Activated CD4-positive, alpha-beta T cell treated with anti-CD3 and anti-CD28 coated beads for 36 hours (primary cell): ENCODE measurements at regions of chr6 and their contacts with region 1.

Region 1: DNA sequence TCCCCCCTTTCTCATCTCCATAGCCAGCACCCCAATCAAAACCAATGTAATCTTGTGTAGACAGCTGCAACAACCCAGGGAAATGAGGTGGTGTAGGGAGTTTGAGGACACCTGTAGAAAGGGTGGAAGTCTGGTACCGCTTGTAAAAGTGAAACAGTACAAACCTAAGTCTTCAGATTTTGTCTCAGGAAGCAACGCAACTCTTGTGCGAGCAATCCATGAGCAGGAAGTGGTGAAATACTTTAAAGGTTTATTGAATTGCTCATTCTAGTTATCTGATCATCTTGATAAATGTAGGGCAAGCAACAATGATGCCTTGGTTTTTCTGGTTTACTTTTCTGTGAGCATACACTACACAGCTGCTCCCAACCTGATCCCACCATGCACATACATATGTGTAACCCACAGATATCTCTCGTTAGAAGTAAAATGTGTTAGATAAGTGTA is 71.1 kb upstream of the THEMIS start:
- DNase-seq: peak; percentile 64
- ATAC-seq: peak; percentile 89
- H3K4me3 Mint-ChIP-seq: peak overlapping the region; percentile 70
- H3K27ac Mint-ChIP-seq: peak overlapping the region; percentile 90
- H3K4me1 Mint-ChIP-seq: peaks cover 60% of the 10 kb centered on the region
- H3K27me3 Mint-ChIP-seq: no peaks in the 10 kb centered on the region

Region 2: GRCh38 chr6:127737009-127737486 is 234.9 kb before region 1 on chr6:
- CTCF ChIA-PET with region 1: interaction called, 3 read pairs
- POLR2A ChIA-PET with region 1: no interaction called
- intact Hi-C with region 1: loop called in 1 of 2 experiments (anchors 5 kb)
- DNase-seq: peak; percentile 42
- ATAC-seq: peak; percentile 90
- H3K4me3 Mint-ChIP-seq: no peak overlapping the region
- H3K27ac Mint-ChIP-seq: peak overlapping the region; percentile 29
- H3K4me1 Mint-ChIP-seq: peaks cover 44% of the 10 kb centered on the region
- H3K27me3 Mint-ChIP-seq: no peaks in the 10 kb centered on the region

Region 3: DNA sequence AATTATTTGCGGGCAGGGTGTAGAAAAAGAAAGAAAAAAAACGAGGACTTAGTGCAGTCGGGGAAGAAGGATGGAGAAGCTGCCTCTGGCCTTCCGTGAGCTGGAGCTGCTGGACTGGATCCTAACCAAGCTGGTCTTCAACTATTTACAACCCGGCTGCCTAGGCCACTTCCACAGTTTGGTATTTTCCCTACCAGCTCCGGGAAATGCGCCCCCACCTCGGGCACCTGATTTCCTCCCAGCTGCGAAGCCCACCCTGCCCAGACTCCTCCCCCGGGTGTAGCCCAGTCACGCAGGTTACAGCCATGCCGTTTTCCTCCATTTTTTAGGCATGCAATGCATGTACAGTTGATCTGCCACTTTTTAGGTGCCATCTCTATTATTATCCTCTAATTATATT is 92.3 kb before region 1 on chr6:
- CTCF ChIA-PET with region 1: no interaction called
- POLR2A ChIA-PET with region 1: interaction called, 8 read pairs
- intact Hi-C with region 1: loop called (anchors 1 kb)
- DNase-seq: peak; percentile 47
- ATAC-seq: peak; percentile 13
- H3K4me3 Mint-ChIP-seq: peak overlapping the region; percentile 65
- H3K27ac Mint-ChIP-seq: peak overlapping the region; percentile 76
- H3K4me1 Mint-ChIP-seq: peaks cover 78% of the 10 kb centered on the region
- H3K27me3 Mint-ChIP-seq: no peaks in the 10 kb centered on the region

Region 4: GRCh38 chr6:127907960-127908640 is 63.9 kb before region 1 on chr6:
- CTCF ChIA-PET with region 1: no interaction called
- POLR2A ChIA-PET with region 1: interaction called, 4 read pairs
- intact Hi-C with region 1: loop called (anchors 1 to 2 kb)
- DNase-seq: peak; percentile 61
- ATAC-seq: peak; percentile 83
- H3K4me3 Mint-ChIP-seq: peak overlapping the region; percentile 61
- H3K27ac Mint-ChIP-seq: peak overlapping the region; percentile 84
- H3K4me1 Mint-ChIP-seq: peaks cover 55% of the 10 kb centered on the region
- H3K27me3 Mint-ChIP-seq: no peaks in the 10 kb centered on the region

Region 5: DNA sequence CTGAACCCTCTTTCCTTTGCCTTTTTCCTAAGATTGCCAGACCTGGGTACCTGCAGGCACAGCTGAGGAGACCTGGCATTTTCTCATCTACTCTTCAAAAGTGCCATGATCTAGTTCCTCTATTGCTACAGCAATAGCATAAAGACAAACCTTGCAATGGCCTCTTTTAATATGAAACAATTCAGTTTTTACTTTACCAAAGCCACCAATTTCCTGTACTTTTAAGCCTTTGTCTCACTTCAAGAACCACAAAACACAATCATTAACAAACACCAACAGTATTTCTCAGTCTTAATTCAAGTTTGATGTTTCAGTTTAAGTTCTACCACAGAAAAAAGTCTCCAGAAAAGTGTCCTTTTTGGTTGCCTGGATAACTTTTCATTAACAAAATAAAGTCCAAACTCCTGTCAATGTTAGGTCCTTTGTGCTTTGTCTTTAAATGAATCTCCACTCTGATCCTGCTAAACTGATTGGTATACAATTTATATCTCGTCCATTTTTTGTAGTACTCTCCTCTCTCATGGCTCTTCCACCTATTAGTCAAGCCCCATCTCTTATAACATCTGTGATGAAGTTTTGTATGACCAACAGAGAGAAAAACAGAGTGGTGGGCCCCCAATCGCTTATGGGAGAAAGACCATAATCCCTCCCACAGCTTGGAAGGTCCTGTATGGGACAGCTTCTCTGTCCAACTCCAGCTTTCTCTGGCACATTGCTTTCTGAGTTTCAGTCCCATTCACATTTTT is 20.6 kb before region 1 on chr6:
- CTCF ChIA-PET with region 1: interaction called, 11 read pairs
- POLR2A ChIA-PET with region 1: no interaction called
- intact Hi-C with region 1: loop called (anchors 1 kb)
- DNase-seq: no peak
- ATAC-seq: peak; percentile 68
- H3K4me3 Mint-ChIP-seq: peak overlapping the region; percentile 2
- H3K27ac Mint-ChIP-seq: peak overlapping the region; percentile 44
- H3K4me1 Mint-ChIP-seq: peaks cover 57% of the 10 kb centered on the region
- H3K27me3 Mint-ChIP-seq: no peaks in the 10 kb centered on the region

Region 6: DNA sequence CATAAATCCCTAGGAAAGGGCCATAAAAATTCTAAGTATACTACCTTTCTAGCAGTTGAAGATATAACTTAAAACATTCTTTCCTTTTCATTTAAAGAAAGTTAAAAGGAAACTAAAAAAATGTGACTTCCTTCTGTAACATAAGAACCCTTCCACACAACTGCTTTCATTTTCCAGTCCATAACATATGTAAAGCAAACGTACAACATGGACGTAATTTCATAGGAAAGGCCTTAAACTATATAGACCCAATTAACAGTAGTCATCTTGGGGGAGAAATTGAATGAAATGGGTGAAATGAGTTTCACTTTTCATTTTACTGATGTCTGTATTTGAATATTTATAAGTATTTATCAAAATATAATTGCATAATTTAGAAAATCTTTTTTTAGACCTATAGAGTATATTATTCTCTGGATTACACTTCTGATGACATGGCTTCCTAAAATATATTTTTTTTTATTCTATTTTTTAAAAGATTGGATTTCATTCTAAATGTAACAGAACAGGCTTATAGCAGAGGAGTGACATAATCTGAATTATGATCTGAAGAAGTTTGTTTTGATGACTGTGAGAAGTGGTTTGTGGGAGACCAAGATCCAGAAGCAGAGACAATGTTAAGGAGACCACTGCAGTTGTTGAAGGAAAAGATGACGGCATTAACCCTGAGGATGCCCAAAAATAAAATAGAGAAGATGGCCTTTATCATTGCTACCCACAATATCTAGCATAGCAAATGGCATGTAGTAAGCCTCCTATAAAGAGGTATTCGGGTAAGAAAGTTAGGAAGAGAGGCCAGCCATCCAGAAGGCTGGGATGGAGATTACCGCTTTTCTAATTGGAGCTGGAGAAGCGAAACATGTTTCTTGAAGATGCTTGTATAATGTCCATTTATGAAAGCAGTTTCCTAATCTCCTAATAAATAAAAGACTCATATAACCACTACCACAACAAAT is 288.0 kb after region 1 on chr6:
- CTCF ChIA-PET with region 1: no interaction called
- POLR2A ChIA-PET with region 1: no interaction called
- intact Hi-C with region 1: loop called in 1 of 2 experiments (anchors 2 kb)
- DNase-seq: no peak
- ATAC-seq: peak; percentile 54
- H3K4me3 Mint-ChIP-seq: peak overlapping the region; percentile 62
- H3K27ac Mint-ChIP-seq: peak overlapping the region; percentile 51
- H3K4me1 Mint-ChIP-seq: peaks cover 29% of the 10 kb centered on the region
- H3K27me3 Mint-ChIP-seq: no peaks in the 10 kb centered on the region